ENCODE measurements at regions of chr10 and their contacts with region 1.

Region 1: GRCh38 chr10:92284112-92284704 is 6.7 kb downstream of the CPEB3 start:
- DNase-seq: peak; percentile 61
- H3K4me3 Mint-ChIP-seq: peak overlapping the region; percentile 55
- H3K27ac Mint-ChIP-seq: peak overlapping the region; percentile 76
- H3K4me1 Mint-ChIP-seq: peaks cover 21% of the 10 kb centered on the region
- H3K27me3 Mint-ChIP-seq: no peaks in the 10 kb centered on the region

Region 2: GRCh38 chr10:92181575-92181974 is 102.6 kb before region 1 on chr10:
- intact Hi-C with region 1: no loop called
- DNase-seq: no peak
- H3K4me3 Mint-ChIP-seq: no peak overlapping the region
- H3K27ac Mint-ChIP-seq: no peak overlapping the region
- H3K4me1 Mint-ChIP-seq: no peaks in the 10 kb centered on the region
- H3K27me3 Mint-ChIP-seq: no peaks in the 10 kb centered on the region

Region 3: GRCh38 chr10:92267343-92267742 is 16.9 kb before region 1 on chr10:
- intact Hi-C with region 1: loop called (anchors 2 kb)
- DNase-seq: no peak
- H3K4me3 Mint-ChIP-seq: no peak overlapping the region
- H3K27ac Mint-ChIP-seq: no peak overlapping the region
- H3K4me1 Mint-ChIP-seq: peaks cover 11% of the 10 kb centered on the region
- H3K27me3 Mint-ChIP-seq: no peaks in the 10 kb centered on the region

Measured in activated CD4-positive, alpha-beta T cell treated with anti-CD3 and anti-CD28 coated beads, Interleukin-2, amount 10 ng/mL, durations not matched to agents 24 days and 14 days (primary cell).